ENCODE measurements at regions of chr11 and their contacts with region 1.

Region 1: GRCh38 chr11:114762408-114762807 is 84.1 kb downstream of the NXPE2 start:
- DNase-seq: peak; percentile 73
- ATAC-seq: peak; percentile 86

Region 2: DNA sequence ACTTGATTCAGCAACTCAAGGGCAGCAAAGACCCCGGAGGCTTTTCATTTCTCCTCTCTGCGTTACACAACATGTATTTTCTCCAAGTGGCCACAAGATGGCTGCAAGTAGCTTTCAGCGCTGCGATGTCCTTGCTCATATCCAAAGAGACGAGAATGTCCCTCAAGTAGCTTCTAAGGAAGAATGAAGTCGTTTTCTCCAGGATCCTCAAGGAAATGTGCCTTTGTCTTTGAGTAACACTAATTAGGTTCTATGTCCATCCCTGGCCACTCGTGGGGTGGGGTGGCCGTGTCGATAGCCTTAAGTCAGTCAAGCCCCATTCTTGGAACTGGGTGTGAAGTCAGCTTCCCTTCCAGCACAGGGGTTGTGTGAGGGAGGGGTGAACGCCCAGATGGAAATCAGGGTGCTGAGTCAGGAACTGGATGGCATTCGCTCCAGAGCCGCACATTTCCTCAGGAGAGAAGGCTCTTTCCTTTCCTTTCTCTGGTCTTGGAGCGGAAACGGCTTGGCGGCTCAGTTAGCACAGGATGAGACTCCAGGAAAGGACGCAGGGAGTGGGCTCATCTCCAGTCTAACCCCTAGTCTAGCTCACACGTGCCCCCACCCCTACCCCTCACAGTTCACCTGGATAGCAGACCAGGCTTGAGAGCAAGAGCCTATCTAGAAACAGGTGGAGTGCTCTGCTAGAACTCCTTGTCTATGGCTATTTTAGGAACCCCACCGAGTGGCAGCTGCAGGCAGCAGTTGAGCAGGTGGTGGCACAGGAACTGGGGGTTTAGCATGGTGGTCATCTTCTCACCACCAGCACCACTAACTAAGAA is 421.9 kb before region 1 on chr11:
- intact Hi-C with region 1: loop called (anchors 5 kb)
- DNase-seq: peak; percentile 33
- ATAC-seq: peak; percentile 89

Measured in left ventricle myocardium superior (tissue), 1 donor.